Naive thymus-derived CD4-positive, alpha-beta T cell (primary cell): ENCODE measurements at regions of chr10 and their contacts with region 1.

Region 1: GRCh38 chr10:68901104-68901927 is at the start of gene DDX50:
- DNase-seq: peak; percentile 86 to 97 (median 95)
- ATAC-seq: peak; percentile 98
- H3K4me3 ChIP-seq: peak within 1 kb of the TSS; percentile 78
- H3K4me3 Mint-ChIP-seq: peak within 1 kb of the TSS; percentile 93 to 99 (median 97)
- H3K27ac ChIP-seq: peak within 1 kb of the TSS; percentile 95
- H3K27ac Mint-ChIP-seq: peak within 1 kb of the TSS; percentile 97 to 100 (median 99)
- H3K4me1 ChIP-seq: peaks cover 20 to 34% of the 10 kb centered on the region in 2 donors
- H3K4me1 Mint-ChIP-seq: peaks cover 28 to 53% (median 44%) of the 10 kb centered on the region in 7 donors
- H3K27me3 ChIP-seq: no peaks in the 10 kb centered on the region
- H3K27me3 Mint-ChIP-seq: no peaks in the 10 kb centered on the region
- total RNA-seq, gene DDX50: 28.3 to 49.3 (median 47.5) TPM

Region 2: GRCh38 chr10:67849331-67850011 is 1051.8 kb before region 1 on chr10:
- CTCF ChIA-PET with region 1: no interaction called
- POLR2A ChIA-PET with region 1: no interaction called
- intact Hi-C with region 1: loop called (anchors 1 kb)
- DNase-seq: peak; percentile 81 to 91 (median 89)
- ATAC-seq: peak; percentile 100
- H3K4me3 ChIP-seq: peak overlapping the region; percentile 79
- H3K4me3 Mint-ChIP-seq: peak overlapping the region; percentile 84 to 99 (median 96)
- H3K27ac ChIP-seq: peak overlapping the region; percentile 82
- H3K27ac Mint-ChIP-seq: peak overlapping the region; percentile 81 to 100 (median 97)
- H3K4me1 ChIP-seq: peaks cover 5 to 6% of the 10 kb centered on the region in 2 donors
- H3K4me1 Mint-ChIP-seq: peaks cover 5 to 12% (median 8%) of the 10 kb centered on the region in 7 donors
- H3K27me3 ChIP-seq: no peaks in the 10 kb centered on the region
- H3K27me3 Mint-ChIP-seq: no peaks in the 10 kb centered on the region

Region 3: DNA sequence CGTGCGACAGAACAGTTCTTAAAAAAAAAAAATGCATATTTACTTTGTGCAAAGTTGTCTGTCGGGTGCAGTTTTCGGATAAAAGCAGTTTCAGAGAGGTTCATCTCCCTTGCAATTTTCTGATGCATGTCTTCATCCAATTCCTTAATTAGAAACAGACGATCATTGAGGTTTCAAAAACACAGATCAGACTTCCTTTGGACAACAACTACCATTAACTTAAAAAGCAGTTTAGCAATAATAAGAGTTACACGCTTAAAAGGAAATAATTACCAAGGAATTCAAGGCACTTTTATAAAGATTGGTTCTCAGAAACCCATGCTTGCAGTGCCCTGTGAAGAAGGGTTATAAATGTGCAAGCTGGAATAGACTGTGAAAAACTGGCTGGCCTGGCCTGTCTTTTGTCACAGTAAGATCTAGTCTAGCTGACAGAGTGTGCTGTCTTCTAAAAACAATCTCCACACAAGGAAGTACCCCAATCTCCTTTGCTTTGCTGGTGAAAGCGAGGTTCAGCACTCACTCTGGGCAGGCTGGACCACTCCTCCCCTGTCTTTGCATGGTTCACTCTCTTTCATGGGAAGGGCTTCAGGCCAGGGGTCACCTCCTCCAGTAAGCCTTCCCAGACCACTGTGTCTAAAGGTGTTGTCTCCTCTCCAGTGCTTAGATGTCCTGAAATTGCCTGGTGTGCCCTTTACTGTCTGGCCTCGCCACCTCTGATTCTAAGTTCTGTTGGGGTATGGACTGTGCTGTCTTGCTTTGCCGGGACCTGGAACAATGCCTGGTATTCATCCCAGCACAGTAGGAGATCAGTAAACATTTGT is 604.3 kb before region 1 on chr10:
- CTCF ChIA-PET with region 1: no interaction called
- POLR2A ChIA-PET with region 1: no interaction called
- intact Hi-C with region 1: no loop called
- DNase-seq: no peak
- ATAC-seq: no peak
- H3K4me3 ChIP-seq: no peak overlapping the region
- H3K4me3 Mint-ChIP-seq: no peak overlapping the region
- H3K27ac ChIP-seq: no peak overlapping the region
- H3K27ac Mint-ChIP-seq: no peak overlapping the region
- H3K4me1 ChIP-seq: no peaks in the 10 kb centered on the region
- H3K4me1 Mint-ChIP-seq: peaks cover 0 to 1% (median 0%) of the 10 kb centered on the region in 7 donors
- H3K27me3 ChIP-seq: no peaks in the 10 kb centered on the region
- H3K27me3 Mint-ChIP-seq: no peaks in the 10 kb centered on the region

Region 4: GRCh38 chr10:68406815-68407548 is 494.3 kb before region 1 on chr10 and contains the start of gene RUFY2:
- CTCF ChIA-PET with region 1: no interaction called
- POLR2A ChIA-PET with region 1: no interaction called
- intact Hi-C with region 1: loop called (anchors 1 to 5 kb)
- DNase-seq: peak; percentile 61 to 91 (median 74)
- ATAC-seq: peak; percentile 98
- H3K4me3 ChIP-seq: peak within 1 kb of the TSS; percentile 73
- H3K4me3 Mint-ChIP-seq: peak within 1 kb of the TSS; percentile 85 to 96 (median 89)
- H3K27ac ChIP-seq: peak within 1 kb of the TSS; percentile 76
- H3K27ac Mint-ChIP-seq: peak within 1 kb of the TSS; percentile 62 to 90 (median 81)
- H3K4me1 ChIP-seq: peaks cover 3 to 7% of the 10 kb centered on the region in 2 donors
- H3K4me1 Mint-ChIP-seq: peaks cover 10 to 19% (median 17%) of the 10 kb centered on the region in 7 donors
- H3K27me3 ChIP-seq: no peaks in the 10 kb centered on the region
- H3K27me3 Mint-ChIP-seq: no peaks in the 10 kb centered on the region
- total RNA-seq, gene RUFY2: 15.1 to 24.7 (median 20.4) TPM

Region 5: GRCh38 chr10:68720793-68721672 is 180.3 kb before region 1 on chr10 and contains the start of gene CCAR1:
- CTCF ChIA-PET with region 1: no interaction called
- POLR2A ChIA-PET with region 1: interaction called, 3 read pairs
- intact Hi-C with region 1: loop called (anchors 1 kb)
- DNase-seq: peak; percentile 86 to 97 (median 96)
- ATAC-seq: peak; percentile 99
- H3K4me3 ChIP-seq: peak within 1 kb of the TSS; percentile 64
- H3K4me3 Mint-ChIP-seq: peak within 1 kb of the TSS; percentile 87 to 100 (median 96)
- H3K27ac ChIP-seq: peak within 1 kb of the TSS; percentile 96
- H3K27ac Mint-ChIP-seq: peak within 1 kb of the TSS; percentile 95 to 99 (median 98)
- H3K4me1 ChIP-seq: peaks cover 6 to 7% of the 10 kb centered on the region in 2 donors
- H3K4me1 Mint-ChIP-seq: peaks cover 10 to 23% (median 16%) of the 10 kb centered on the region in 7 donors
- H3K27me3 ChIP-seq: no peaks in the 10 kb centered on the region
- H3K27me3 Mint-ChIP-seq: peaks cover 0 to 2% (median 0%) of the 10 kb centered on the region in 5 donors
- total RNA-seq, gene CCAR1: 64.4 to 89.5 (median 88.2) TPM

Region 6: GRCh38 chr10:68759967-68760366 is 141.3 kb before region 1 on chr10:
- CTCF ChIA-PET with region 1: no interaction called
- POLR2A ChIA-PET with region 1: no interaction called
- intact Hi-C with region 1: no loop called
- DNase-seq: no peak
- ATAC-seq: no peak
- H3K4me3 ChIP-seq: no peak overlapping the region
- H3K4me3 Mint-ChIP-seq: no peak overlapping the region
- H3K27ac ChIP-seq: no peak overlapping the region
- H3K27ac Mint-ChIP-seq: no peak overlapping the region
- H3K4me1 ChIP-seq: no peaks in the 10 kb centered on the region
- H3K4me1 Mint-ChIP-seq: peaks cover 0 to 13% (median 4%) of the 10 kb centered on the region in 7 donors
- H3K27me3 ChIP-seq: no peaks in the 10 kb centered on the region
- H3K27me3 Mint-ChIP-seq: no peaks in the 10 kb centered on the region

Region 7: GRCh38 chr10:68988530-68989316 is 87.4 kb after region 1 on chr10 and contains the start of gene KIFBP:
- CTCF ChIA-PET with region 1: no interaction called
- POLR2A ChIA-PET with region 1: interaction called, 4 read pairs
- intact Hi-C with region 1: loop called in 1 of 2 experiments (anchors 1 kb)
- DNase-seq: peak; percentile 50 to 84 (median 82)
- ATAC-seq: peak; percentile 93
- H3K4me3 ChIP-seq: peak within 1 kb of the TSS; percentile 89
- H3K4me3 Mint-ChIP-seq: peak within 1 kb of the TSS; percentile 94 to 100 (median 99)
- H3K27ac ChIP-seq: peak within 1 kb of the TSS; percentile 82
- H3K27ac Mint-ChIP-seq: peak within 1 kb of the TSS; percentile 82 to 99 (median 94)
- H3K4me1 ChIP-seq: peaks cover 15 to 20% of the 10 kb centered on the region in 2 donors
- H3K4me1 Mint-ChIP-seq: peaks cover 31 to 65% (median 56%) of the 10 kb centered on the region in 7 donors
- H3K27me3 ChIP-seq: no peaks in the 10 kb centered on the region
- H3K27me3 Mint-ChIP-seq: peaks cover 0 to 2% (median 0%) of the 10 kb centered on the region in 5 donors
- total RNA-seq, gene KIFBP: 4.5 to 18.1 (median 14.0) TPM

Region 8: GRCh38 chr10:70169649-70170364 is 1268.5 kb after region 1 on chr10:
- CTCF ChIA-PET with region 1: no interaction called
- POLR2A ChIA-PET with region 1: no interaction called
- intact Hi-C with region 1: loop called in 1 of 2 experiments (anchors 2 kb)
- DNase-seq: peak in 2 of 9 donors; percentile 8 to 30
- ATAC-seq: peak; percentile 18
- H3K4me3 ChIP-seq: peak overlapping the region; percentile 88
- H3K4me3 Mint-ChIP-seq: peak overlapping the region; percentile 86 to 97 (median 94)
- H3K27ac ChIP-seq: peak overlapping the region; percentile 95
- H3K27ac Mint-ChIP-seq: peak overlapping the region; percentile 83 to 98 (median 96)
- H3K4me1 ChIP-seq: peaks cover 47 to 49% of the 10 kb centered on the region in 2 donors
- H3K4me1 Mint-ChIP-seq: peaks cover 46 to 70% (median 65%) of the 10 kb centered on the region in 7 donors
- H3K27me3 ChIP-seq: no peaks in the 10 kb centered on the region
- H3K27me3 Mint-ChIP-seq: no peaks in the 10 kb centered on the region